ENCODE measurements at regions of chr4 and their contacts with region 1.

Region 1: DNA sequence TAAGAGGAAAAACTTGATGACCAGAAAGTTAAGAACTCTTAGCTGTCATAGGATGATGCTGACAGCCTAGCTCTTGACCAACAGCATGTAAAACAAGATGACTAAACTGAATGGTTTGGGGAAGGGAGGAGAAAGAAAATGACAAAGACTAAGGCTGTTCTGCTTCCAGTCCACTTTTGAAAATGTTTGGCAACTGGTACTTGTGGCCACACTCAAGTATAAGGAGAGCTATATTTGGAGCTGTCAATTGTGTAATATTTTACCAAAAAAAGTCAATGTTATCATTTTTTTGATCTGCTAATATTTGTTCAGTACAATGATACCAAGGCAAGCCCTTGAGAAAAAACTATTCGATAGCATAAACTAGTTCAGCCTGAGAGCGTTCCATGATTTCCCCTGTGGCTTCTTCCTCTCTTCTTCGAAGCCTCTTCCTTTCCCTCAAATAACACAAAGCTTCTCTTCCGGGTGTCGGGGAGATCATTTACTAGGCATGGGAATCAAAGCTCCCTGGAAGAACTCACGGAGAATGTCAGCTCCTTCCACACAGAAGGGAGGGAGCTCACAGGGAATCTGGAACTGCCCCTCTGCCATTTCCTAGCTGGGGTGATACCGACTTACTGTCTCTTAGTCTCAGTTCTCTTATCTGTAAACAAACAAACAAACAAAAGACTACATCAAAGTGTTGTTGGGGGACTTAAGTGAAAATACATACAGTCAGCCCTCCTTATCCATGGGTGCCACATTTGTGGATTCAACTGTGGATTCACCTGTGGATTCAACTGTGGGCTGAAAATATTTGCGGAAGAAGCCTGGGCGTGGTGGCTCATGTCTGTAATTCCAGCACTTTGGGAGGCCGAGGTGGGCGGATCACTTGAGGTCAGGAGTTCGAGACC is 82.6 kb downstream of the SCD5 start:
- DNase-seq: no peak
- ATAC-seq: no peak
- H3K4me3 ChIP-seq: no peak overlapping the region
- H3K4me3 Mint-ChIP-seq: no peak overlapping the region
- H3K27ac ChIP-seq: no peak overlapping the region
- H3K27ac Mint-ChIP-seq: no peak overlapping the region
- H3K4me1 ChIP-seq: no peaks in the 10 kb centered on the region
- H3K4me1 Mint-ChIP-seq: no peaks in the 10 kb centered on the region
- H3K27me3 ChIP-seq: no peaks in the 10 kb centered on the region
- H3K27me3 Mint-ChIP-seq: no peaks in the 10 kb centered on the region
- CTCF ChIP-seq: no peak

Region 2: DNA sequence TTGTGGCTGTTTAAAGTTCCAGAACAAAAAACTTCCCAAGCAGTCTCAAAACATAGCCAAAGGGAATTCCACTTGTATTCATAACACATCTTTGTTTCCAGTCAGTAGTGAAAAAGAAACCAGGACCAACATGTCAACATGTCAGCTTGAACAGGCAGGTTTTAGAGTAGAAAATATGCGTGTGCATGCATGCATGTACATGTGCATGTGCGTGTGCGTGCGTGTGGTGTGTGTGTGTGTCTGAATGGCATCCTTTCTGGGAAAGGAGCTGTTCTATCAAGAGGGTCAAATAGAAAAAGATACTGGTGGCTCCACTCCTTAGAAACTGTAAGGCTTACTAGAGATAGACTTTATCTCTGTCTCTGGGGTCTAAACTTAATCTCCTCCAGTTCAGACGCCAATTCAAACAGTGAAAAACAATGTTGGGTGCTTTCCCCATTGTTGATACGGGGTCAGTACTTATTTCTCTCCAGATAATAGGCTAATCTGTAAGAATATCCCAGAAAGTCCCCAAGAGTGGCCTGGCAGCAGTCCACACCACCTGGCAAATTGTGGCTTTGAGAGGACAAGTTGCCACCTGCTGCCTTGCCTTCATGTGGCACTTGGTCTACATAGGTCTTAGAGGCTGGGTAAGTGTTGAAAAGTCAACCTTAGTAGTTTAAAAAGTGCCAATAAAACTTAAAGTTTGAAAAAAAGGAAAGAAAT is 27.7 kb before region 1 on chr4:
- CTCF ChIA-PET with region 1: no interaction called
- POLR2A ChIA-PET with region 1: no interaction called
- intact Hi-C with region 1: loop called in 1 of 2 experiments (anchors 1 kb)
- DNase-seq: no peak
- ATAC-seq: no peak
- H3K4me3 ChIP-seq: no peak overlapping the region
- H3K4me3 Mint-ChIP-seq: no peak overlapping the region
- H3K27ac ChIP-seq: no peak overlapping the region
- H3K27ac Mint-ChIP-seq: no peak overlapping the region
- H3K4me1 ChIP-seq: no peaks in the 10 kb centered on the region
- H3K4me1 Mint-ChIP-seq: no peaks in the 10 kb centered on the region
- H3K27me3 ChIP-seq: no peaks in the 10 kb centered on the region
- H3K27me3 Mint-ChIP-seq: peaks cover 8% of the 10 kb centered on the region
- CTCF ChIP-seq: no peak

Region 3: DNA sequence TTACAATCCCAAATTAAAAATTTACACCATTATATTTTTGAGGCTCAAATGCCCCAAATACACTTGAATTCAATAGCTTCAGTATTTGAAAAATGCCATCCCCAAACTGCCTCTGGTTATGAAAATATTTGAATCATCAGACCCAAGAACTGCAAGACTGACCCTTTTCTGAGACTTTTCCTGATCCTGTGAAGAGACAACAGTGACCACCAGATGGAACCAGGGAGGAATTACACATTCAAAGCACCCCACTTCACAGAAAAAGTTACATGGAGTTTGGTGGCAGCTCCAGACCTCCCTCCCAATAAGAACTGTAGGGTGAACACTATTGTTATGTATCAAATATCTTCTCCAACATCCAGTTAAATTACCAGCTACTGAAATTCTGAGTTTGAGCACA is 126.6 kb after region 1 on chr4:
- CTCF ChIA-PET with region 1: no interaction called
- POLR2A ChIA-PET with region 1: no interaction called
- intact Hi-C with region 1: no loop called
- DNase-seq: peak in 2 of 9 experiments; percentile 11 to 29
- ATAC-seq: no peak
- H3K4me3 ChIP-seq: no peak overlapping the region
- H3K4me3 Mint-ChIP-seq: no peak overlapping the region
- H3K27ac ChIP-seq: no peak overlapping the region
- H3K27ac Mint-ChIP-seq: no peak overlapping the region
- H3K4me1 ChIP-seq: no peaks in the 10 kb centered on the region
- H3K4me1 Mint-ChIP-seq: no peaks in the 10 kb centered on the region
- H3K27me3 ChIP-seq: no peaks in the 10 kb centered on the region
- H3K27me3 Mint-ChIP-seq: no peaks in the 10 kb centered on the region
- CTCF ChIP-seq: no peak

Measured in CD8-positive, alpha-beta T cell (primary cell).